Sciatic nerve (tissue), 2 donors: ENCODE measurements at regions of chrX and their contacts with region 1.

Region 1: GRCh38 chrX:52995135-52996020 is 37.1 kb upstream of the FAM156A start:
- DNase-seq: peak; percentile 94
- ATAC-seq: peak; percentile 99

Region 2: GRCh38 chrX:53050841-53051240 is 55.5 kb after region 1 on chrX:
- intact Hi-C with region 1: loop called (anchors 5 kb)
- DNase-seq: no peak
- ATAC-seq: no peak